ENCODE measurements at regions of chr12 and their contacts with region 1.

Region 1: DNA sequence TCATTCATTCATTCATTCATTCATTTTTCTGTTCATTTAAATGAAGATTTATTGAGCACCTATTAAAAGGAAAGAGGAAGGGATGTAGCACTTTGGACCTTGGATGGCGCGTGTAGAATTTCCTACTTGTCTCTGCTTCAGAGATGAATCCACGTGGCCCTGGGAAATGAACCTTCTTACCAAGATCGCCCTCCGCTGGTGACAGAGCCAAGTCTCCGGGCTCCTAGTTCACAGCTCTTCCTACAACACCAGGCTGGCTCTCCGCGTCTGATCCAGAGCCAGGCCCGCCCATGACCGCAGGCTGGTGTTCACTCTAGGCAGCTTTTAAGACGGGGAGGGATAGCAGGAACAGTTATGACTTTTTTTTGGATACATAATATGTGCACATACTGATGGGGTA is 70.9 kb upstream of the PIWIL1 start:
- DNase-seq: no peak
- ATAC-seq: no peak

Region 2: DNA sequence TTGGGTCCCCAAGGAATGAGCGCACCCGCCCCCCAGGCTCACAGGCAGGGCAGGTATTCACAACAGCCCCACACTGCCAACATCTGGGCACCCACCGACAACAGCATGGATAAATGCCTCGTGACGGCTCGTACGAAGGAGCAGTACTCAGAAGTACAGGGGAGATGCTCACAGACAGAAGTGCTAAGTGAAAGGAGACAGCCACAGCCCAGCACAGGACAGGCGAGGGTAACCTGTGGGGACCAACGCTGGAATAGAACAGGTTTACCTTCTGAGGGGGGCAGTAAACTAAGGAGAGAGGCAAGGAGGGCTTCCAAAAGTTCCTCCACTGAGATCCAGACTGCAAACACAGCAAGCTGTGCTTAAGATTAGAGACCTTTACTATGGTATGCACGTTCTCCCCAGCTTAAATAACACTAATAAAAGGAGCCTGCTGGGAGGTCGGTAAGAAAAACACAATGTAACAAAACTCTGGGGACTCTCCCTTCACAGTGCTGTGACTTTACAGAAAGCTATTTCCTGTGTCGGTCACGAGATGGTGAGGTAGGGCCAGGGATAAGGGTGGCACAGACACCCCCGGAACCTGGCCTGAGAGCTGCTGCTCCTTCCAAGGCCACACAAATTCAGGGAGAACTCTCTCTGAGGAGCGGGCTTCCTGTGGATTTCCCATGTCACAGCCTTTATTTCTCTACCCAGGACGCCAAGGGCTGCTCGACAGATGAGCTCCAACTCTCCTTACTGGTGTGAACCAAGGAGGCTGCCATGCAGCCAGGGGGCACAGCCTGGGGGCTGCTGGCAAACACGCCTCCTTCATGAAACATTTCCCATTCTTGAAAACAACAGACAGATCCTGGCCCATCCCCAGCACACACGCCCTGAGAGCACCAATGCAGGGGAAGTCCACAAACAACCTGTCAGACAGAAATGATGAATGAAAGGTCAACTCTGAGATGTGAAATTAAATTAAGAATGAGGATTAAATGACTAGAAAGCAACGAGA is 1469.3 kb before region 1 on chr12:
- intact Hi-C with region 1: loop called (anchors 5 kb)
- DNase-seq: no peak
- ATAC-seq: no peak

Region 3: DNA sequence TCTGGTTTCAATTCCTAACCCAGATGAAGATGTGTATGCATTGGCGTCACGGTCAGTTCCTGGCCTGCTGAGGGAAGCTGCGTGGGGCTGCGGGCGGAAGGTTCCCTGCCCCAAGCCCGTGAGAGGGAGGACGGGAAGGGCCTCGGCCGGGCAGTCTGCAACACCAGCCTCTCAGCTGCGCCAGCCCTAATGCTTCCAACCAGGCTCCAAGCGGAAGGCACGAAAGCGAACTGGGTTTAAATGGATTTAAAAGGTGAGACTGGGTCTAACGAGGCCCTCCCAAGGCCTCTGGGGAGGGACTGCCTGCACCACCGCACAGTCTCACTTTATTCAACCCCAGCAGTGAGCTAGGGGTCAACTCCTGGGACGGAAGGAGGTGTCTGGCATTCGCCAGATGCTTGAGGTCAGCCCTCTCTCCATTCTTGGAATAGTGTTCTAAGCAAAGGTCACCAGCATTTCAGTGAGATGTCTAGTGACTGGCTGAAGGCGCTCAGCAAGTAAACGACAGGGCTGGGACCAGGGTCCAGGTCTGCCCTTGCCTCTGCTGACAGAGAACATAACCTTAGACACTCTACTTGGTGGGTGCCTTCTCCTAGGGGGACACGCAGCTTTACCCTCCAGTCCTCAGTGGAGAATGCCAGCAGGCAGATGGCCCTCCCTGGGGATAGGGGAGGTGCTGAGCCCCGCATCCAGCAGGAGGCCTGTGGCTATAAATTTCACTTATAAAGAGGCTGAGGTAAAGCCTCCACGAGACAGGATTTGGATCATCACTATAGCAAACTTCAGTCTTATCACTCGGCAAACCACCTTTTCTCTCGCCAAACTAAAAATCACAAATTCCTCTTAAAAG is 163.1 kb after region 1 on chr12:
- intact Hi-C with region 1: no loop called
- DNase-seq: peak; percentile 6
- ATAC-seq: no peak